Heart right ventricle (tissue), 16 donors: ENCODE measurements at regions of chr2 and their contacts with region 1.

Region 1: GRCh38 chr2:224134003-224134734 is 95.1 kb upstream of the SERPINE2 start:
- DNase-seq: no peak
- ATAC-seq: no peak
- H3K4me3 ChIP-seq: no peak overlapping the region
- H3K27ac ChIP-seq: no peak overlapping the region
- H3K4me1 ChIP-seq: no peaks in the 10 kb centered on the region
- H3K27me3 ChIP-seq: peaks cover 0 to 4% (median 0%) of the 10 kb centered on the region in 7 donors
- CTCF ChIP-seq: no peak

Region 2: DNA sequence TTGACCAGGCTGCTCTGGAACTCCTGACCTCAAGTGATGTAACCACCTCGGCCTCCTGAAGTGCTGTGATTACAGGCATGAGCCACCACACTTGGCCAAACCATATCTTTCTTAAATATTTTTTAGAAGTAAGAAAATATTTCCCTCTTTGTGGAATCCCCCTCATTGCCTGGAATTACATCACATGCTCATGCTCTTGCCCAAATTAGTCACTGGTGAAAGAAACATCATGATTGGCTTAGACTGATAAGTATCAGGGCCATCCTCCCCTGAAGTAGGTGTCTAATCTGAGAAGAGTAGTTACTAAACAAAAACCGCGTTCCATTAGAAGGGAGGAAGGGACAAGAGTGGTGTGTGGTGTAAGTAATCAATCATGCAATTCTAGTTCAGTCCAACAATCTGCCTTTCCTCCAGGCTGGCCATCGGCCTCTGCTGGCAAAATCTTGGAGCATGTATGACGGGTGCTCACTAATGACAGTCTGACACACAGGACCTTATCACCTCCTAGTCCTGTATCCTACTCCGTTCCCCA is 479.7 kb before region 1 on chr2:
- intact Hi-C with region 1: no loop called
- DNase-seq: no peak
- ATAC-seq: no peak
- H3K4me3 ChIP-seq: no peak overlapping the region
- H3K27ac ChIP-seq: no peak overlapping the region
- H3K4me1 ChIP-seq: no peaks in the 10 kb centered on the region
- H3K27me3 ChIP-seq: peaks cover 0 to 13% (median 0%) of the 10 kb centered on the region in 7 donors
- CTCF ChIP-seq: no peak

Region 3: GRCh38 chr2:224084266-224084892 is 49.8 kb before region 1 on chr2:
- intact Hi-C with region 1: loop called in 1 of 10 experiments (anchors 5 kb)
- DNase-seq: no peak
- ATAC-seq: peak in 3 of 8 donors; percentile 47 to 57 (median 49)
- H3K4me3 ChIP-seq: no peak overlapping the region
- H3K27ac ChIP-seq: peak overlapping the region in 4 of 10 donors; percentile 27 to 72 (median 52)
- H3K4me1 ChIP-seq: no peaks in the 10 kb centered on the region
- H3K27me3 ChIP-seq: no peaks in the 10 kb centered on the region
- CTCF ChIP-seq: no peak